Activated T-helper 1 cell treated with anti-CD3 and anti-CD28 coated beads, Interleukin-12 subunit alpha, Interleukin-12 subunit beta, Interleukin-2, Interleukin-4 antibody, amounts not matched to agents 30 ng/mL and 10 ng/mL and 1 ng/mL, durations not matched to agents 14 hours and 24 hours and 36 hours (primary cell): ENCODE measurements at regions of chrX and their contacts with region 1.

Region 1: GRCh38 chrX:112851806-112852205 is 11.2 kb upstream of the AMOT start:
- DNase-seq: no peak
- H3K4me3 Mint-ChIP-seq: no peak overlapping the region
- H3K27ac Mint-ChIP-seq: peak overlapping the region; percentile 12
- H3K4me1 Mint-ChIP-seq: peaks cover 34% of the 10 kb centered on the region
- H3K27me3 Mint-ChIP-seq: no peaks in the 10 kb centered on the region

Region 2: DNA sequence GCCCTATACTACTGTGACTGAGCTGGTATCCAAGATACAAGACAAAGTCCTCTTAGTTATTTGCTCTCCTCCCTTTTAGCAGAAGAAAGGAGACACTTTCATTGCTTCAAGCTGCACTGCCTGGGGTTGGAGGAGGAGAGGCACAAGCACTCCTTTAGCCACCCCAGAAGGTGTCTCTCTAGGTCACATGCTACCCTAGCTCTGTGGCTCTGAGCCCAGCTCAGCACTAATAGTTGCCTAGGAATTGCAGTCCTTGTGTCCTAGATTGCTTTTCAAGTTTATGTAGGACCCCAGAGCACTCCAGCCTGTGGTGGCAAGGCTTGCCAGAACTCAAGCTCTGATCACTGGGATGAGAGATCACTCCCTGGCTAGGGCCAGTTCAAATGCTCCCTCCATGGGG is 147.6 kb before region 1 on chrX:
- intact Hi-C with region 1: no loop called
- DNase-seq: no peak
- H3K4me3 Mint-ChIP-seq: no peak overlapping the region
- H3K27ac Mint-ChIP-seq: no peak overlapping the region
- H3K4me1 Mint-ChIP-seq: no peaks in the 10 kb centered on the region
- H3K27me3 Mint-ChIP-seq: no peaks in the 10 kb centered on the region

Region 3: GRCh38 chrX:112738347-112739033 is 113.3 kb before region 1 on chrX:
- intact Hi-C with region 1: loop called (anchors 5 kb)
- DNase-seq: no peak
- H3K4me3 Mint-ChIP-seq: no peak overlapping the region
- H3K27ac Mint-ChIP-seq: no peak overlapping the region
- H3K4me1 Mint-ChIP-seq: no peaks in the 10 kb centered on the region
- H3K27me3 Mint-ChIP-seq: peaks cover 8% of the 10 kb centered on the region

Region 4: GRCh38 chrX:113124693-113125092 is 272.9 kb after region 1 on chrX:
- intact Hi-C with region 1: no loop called
- DNase-seq: no peak
- H3K4me3 Mint-ChIP-seq: no peak overlapping the region
- H3K27ac Mint-ChIP-seq: no peak overlapping the region
- H3K4me1 Mint-ChIP-seq: no peaks in the 10 kb centered on the region
- H3K27me3 Mint-ChIP-seq: no peaks in the 10 kb centered on the region